OCI-LY7 (cell line): ENCODE measurements at regions of chr14 and their contacts with region 1.

Region 1: GRCh38 chr14:52724360-52724644 is 5.7 kb upstream of the STYX start:
- DNase-seq: no peak
- H3K4me3 ChIP-seq: no peak overlapping the region
- H3K27ac ChIP-seq: no peak overlapping the region
- H3K4me1 ChIP-seq: peaks cover 33% of the 10 kb centered on the region
- CTCF ChIP-seq: no peak

Region 2: DNA sequence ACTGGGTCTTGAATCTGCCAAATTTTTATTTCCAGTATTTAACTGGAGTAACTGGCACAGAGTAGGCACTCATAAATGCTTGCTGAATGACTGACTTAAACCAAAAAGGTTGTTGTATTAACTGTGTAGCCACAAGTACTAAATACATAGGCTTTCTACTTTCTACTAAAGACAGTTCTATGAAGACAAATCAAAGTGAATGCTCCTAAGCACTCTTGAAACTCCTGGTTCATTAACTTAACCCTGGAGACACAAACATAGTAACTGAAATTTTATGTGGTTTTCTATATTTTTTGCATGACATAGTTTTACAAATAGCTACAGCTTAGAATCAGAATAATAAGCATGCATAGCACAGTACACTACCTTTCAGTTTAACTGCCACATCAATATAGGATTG is 242.4 kb before region 1 on chr14:
- CTCF ChIA-PET with region 1: no interaction called
- POLR2A ChIA-PET with region 1: no interaction called
- intact Hi-C with region 1: no loop called
- DNase-seq: no peak
- H3K4me3 ChIP-seq: no peak overlapping the region
- H3K27ac ChIP-seq: no peak overlapping the region
- H3K4me1 ChIP-seq: no peaks in the 10 kb centered on the region
- CTCF ChIP-seq: no peak

Region 3: GRCh38 chr14:52706724-52707706 is 17.3 kb before region 1 on chr14 and contains the start of gene PSMC6:
- CTCF ChIA-PET with region 1: no interaction called
- POLR2A ChIA-PET with region 1: interaction called, 11 read pairs
- intact Hi-C with region 1: no loop called
- DNase-seq: peak; percentile 92
- H3K4me3 ChIP-seq: peak within 1 kb of the TSS; percentile 93
- H3K27ac ChIP-seq: peak within 1 kb of the TSS; percentile 60
- H3K4me1 ChIP-seq: peaks cover 21% of the 10 kb centered on the region
- CTCF ChIP-seq: no peak
- total RNA-seq, gene PSMC6: 82.8 and 85.4 TPM in 2 replicates